OCI-LY7 (cell line): ENCODE measurements at regions of chr5 and their contacts with region 1.

Region 1: DNA sequence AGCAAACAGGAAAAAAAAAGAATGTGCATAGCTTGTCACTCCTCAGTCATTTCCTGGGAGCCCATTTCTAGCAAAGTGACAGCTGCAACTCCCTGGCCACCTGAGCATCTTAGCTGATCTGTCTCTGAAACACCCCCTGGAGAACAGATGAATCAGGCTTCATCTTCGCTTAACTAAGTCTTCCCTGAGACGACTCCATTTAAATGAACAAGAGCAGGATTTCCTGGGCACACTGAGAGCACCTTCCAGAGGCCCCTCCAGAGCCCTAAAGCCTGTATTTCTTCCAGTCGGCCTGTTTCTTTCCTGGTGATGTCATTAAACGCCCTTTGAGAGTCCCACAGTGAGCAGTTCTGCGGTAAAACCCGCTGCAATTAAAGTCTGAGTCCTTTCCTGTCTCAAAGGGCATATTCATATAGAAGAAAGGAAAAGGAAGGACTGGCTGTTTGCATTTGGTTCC is 13.9 kb downstream of the TGFBI start:
- DNase-seq: peak; percentile 63
- H3K4me3 ChIP-seq: peak overlapping the region; percentile 22
- H3K27ac ChIP-seq: peak overlapping the region; percentile 44
- H3K4me1 ChIP-seq: peaks cover 39% of the 10 kb centered on the region
- CTCF ChIP-seq: no peak

Region 2: GRCh38 chr5:135999406-136000139 is 43.1 kb before region 1 on chr5:
- CTCF ChIA-PET with region 1: no interaction called
- POLR2A ChIA-PET with region 1: no interaction called
- intact Hi-C with region 1: no loop called
- DNase-seq: no peak
- H3K4me3 ChIP-seq: no peak overlapping the region
- H3K27ac ChIP-seq: no peak overlapping the region
- H3K4me1 ChIP-seq: no peaks in the 10 kb centered on the region
- CTCF ChIP-seq: no peak

Region 3: GRCh38 chr5:136030956-136031611 is 11.6 kb before region 1 on chr5:
- CTCF ChIA-PET with region 1: no interaction called
- POLR2A ChIA-PET with region 1: interaction called, 11 read pairs
- intact Hi-C with region 1: no loop called
- DNase-seq: peak; percentile 52
- H3K4me3 ChIP-seq: peak overlapping the region; percentile 2
- H3K27ac ChIP-seq: peak overlapping the region; percentile 47
- H3K4me1 ChIP-seq: peaks cover 60% of the 10 kb centered on the region
- CTCF ChIP-seq: no peak